Activated B cell treated with CpG ODN at 0.5 μM for 24 hours (primary cell): ENCODE measurements at regions of chr4 and their contacts with region 1.

Region 1: DNA sequence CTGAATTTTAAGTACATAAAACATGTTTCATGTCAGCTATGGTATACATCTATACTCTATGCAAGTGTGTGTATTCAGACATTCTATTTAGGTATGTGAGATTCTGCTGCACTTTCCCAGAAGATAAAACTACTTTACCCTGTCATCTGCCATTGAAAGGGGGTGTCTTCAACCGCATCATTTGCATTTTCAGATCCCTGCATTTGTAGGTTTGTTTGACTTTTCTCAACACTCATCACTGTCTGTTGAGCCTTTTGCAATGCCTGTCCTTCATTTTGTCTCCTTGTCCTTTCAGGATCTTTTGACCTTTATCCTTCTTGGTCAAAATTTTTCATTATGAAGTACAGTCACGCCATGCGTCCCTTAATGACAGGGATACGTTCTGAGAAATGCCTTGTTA is 103.5 kb downstream of the TMA16 start:
- DNase-seq: no peak
- ATAC-seq: peak; percentile 54
- H3K4me3 Mint-ChIP-seq: peak overlapping the region; percentile 45
- H3K27ac Mint-ChIP-seq: peak overlapping the region; percentile 84
- H3K4me1 Mint-ChIP-seq: peaks cover 74% of the 10 kb centered on the region
- H3K27me3 Mint-ChIP-seq: no peaks in the 10 kb centered on the region
- CTCF ChIP-seq: no peak

Region 2: DNA sequence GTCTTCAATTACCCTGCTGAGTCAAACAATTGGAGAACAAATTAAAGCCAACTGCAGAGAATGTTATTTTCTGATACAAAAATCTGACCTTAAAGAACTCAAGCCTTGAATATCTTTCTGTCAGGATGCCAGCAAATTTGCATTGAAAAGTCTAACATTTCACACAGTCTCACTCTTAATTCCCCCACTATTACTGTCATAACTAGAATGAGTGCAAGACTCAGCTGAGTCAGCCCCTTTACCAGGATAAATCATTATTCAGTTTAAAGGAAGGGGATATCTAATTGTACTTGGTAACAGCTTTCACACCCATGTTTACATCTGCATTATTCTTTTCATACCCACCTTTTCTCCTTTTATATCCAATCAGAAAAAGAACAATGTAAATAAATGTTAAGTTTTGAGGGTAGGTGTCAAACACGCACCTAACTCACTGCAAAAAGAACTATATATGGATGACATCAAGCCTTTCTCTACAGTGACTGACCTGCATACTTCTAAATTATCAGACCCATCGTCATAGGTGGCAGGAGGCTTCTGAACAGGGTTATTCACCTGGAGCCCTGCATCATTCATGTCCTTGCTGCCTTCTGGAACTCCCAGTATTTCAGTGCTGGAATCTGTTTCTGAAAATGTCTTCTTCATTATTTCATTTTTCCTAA is 13.9 kb after region 1 on chr4:
- CTCF ChIA-PET with region 1: interaction called, 63 read pairs
- POLR2A ChIA-PET with region 1: interaction called, 153 read pairs
- intact Hi-C with region 1: loop called (anchors 1 kb)
- DNase-seq: no peak
- ATAC-seq: peak; percentile 38
- H3K4me3 Mint-ChIP-seq: peak overlapping the region; percentile 89
- H3K27ac Mint-ChIP-seq: peak overlapping the region; percentile 98
- H3K4me1 Mint-ChIP-seq: peaks cover 74% of the 10 kb centered on the region
- H3K27me3 Mint-ChIP-seq: no peaks in the 10 kb centered on the region
- CTCF ChIP-seq: no peak

Region 3: GRCh38 chr4:163902417-163902816 is 304.4 kb after region 1 on chr4:
- CTCF ChIA-PET with region 1: no interaction called
- POLR2A ChIA-PET with region 1: no interaction called
- intact Hi-C with region 1: no loop called
- DNase-seq: no peak
- ATAC-seq: no peak
- H3K4me3 Mint-ChIP-seq: no peak overlapping the region
- H3K27ac Mint-ChIP-seq: no peak overlapping the region
- H3K4me1 Mint-ChIP-seq: no peaks in the 10 kb centered on the region
- H3K27me3 Mint-ChIP-seq: no peaks in the 10 kb centered on the region
- CTCF ChIP-seq: no peak